Ascending aorta (tissue), 2 donors: ENCODE measurements at regions of chr6 and their contacts with region 1.

Region 1: GRCh38 chr6:133854364-133855275 is 34.3 kb upstream of the TCF21 start:
- DNase-seq: no peak
- H3K4me3 ChIP-seq: peak overlapping the region in 1 of 2 donors; percentile 0
- H3K27ac ChIP-seq: no peak overlapping the region
- H3K4me1 ChIP-seq: peaks cover 0 to 9% of the 10 kb centered on the region in 2 donors
- H3K27me3 ChIP-seq: peaks cover 26% of the 10 kb centered on the region
- CTCF ChIP-seq: no peak

Region 2: DNA sequence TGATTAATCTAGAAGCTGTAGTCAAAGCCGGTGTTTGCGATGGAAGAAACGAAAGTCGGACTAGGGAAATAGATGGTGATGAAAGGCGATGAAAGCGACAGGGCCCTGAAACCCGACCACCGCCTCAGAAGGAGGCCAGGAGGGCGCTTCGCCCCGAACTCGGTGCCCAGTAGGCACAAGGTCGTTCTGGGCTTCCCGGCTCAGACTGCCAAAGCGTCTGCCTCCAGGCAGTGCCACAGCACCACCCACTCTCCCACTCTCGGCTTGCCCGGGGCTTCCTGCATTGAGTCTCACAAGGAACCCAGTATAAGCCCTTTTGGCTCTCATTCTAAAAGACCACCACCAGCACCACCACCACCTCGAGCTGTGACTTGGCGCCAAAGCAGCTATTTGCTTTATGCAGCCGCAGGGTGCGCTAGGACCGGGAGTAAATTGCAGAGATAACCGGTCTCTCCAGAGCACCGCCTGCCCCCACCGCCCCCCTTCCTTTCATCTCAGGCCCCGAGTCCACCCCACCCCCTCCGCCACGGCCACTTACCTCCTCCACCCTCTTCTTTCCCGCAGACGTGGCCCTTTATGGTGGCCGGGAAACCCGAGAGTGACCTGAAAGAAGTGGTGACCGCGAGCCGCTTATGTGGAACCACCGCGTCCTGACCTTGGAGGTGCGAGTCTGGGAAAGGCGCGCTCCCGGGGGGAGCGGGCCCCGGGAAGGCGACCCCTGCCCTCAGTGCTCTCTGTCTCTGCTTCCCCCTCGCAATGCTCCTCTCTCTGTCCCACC is 36.7 kb after region 1 on chr6:
- intact Hi-C with region 1: loop called (anchors 5 kb)
- DNase-seq: no peak
- H3K4me3 ChIP-seq: peak overlapping the region; percentile 49 to 54
- H3K27ac ChIP-seq: no peak overlapping the region
- H3K4me1 ChIP-seq: peaks cover 7 to 9% of the 10 kb centered on the region in 2 donors
- H3K27me3 ChIP-seq: peaks cover 48% of the 10 kb centered on the region
- CTCF ChIP-seq: no peak

Region 3: GRCh38 chr6:133923938-133924593 is 69.4 kb after region 1 on chr6:
- intact Hi-C with region 1: no loop called
- DNase-seq: peak in 1 of 2 donors; percentile 81
- H3K4me3 ChIP-seq: no peak overlapping the region
- H3K27ac ChIP-seq: no peak overlapping the region
- H3K4me1 ChIP-seq: no peaks in the 10 kb centered on the region
- H3K27me3 ChIP-seq: no peaks in the 10 kb centered on the region
- CTCF ChIP-seq: peak; percentile 83 to 84 (median 84)